Endothelial cell of umbilical vein (primary cell): ENCODE measurements at regions of chr7 and their contacts with region 1.

Region 1: DNA sequence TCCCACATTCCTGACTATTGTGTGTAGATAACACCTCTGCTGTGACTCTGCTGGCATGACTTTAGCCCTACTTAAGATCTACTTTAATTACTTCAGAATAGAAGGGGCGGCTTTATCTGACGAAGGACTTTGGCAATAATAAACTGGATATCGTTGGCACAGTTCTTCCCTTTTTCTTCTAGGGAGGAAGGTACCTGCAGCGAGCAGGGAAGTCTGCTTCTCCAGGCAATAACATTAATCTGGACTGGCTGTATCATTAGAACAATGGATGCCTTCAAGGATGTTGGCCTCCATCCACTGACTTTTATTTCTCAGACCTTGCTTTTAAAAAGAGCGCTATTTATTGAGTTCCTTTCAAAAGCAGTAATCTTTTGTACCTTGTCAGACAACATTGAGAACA is 172.6 kb upstream of the THSD7A start:
- DNase-seq: no peak
- H3K4me3 ChIP-seq: no peak overlapping the region
- H3K27ac ChIP-seq: no peak overlapping the region
- H3K4me1 ChIP-seq: no peaks in the 10 kb centered on the region
- H3K27me3 ChIP-seq: no peaks in the 10 kb centered on the region
- CTCF ChIP-seq: no peak
- POLR2A ChIP-seq: no peak

Region 2: GRCh38 chr7:12052211-12052610 is 47.6 kb after region 1 on chr7:
- CTCF ChIA-PET with region 1: no interaction called
- POLR2A ChIA-PET with region 1: no interaction called
- dilution Hi-C with region 1: no loop called
- intact Hi-C with region 1: loop called (anchors 5 kb)
- DNase-seq: no peak
- H3K4me3 ChIP-seq: no peak overlapping the region
- H3K27ac ChIP-seq: no peak overlapping the region
- H3K4me1 ChIP-seq: no peaks in the 10 kb centered on the region
- H3K27me3 ChIP-seq: no peaks in the 10 kb centered on the region
- CTCF ChIP-seq: no peak
- POLR2A ChIP-seq: no peak

Region 3: GRCh38 chr7:12067141-12067831 is 62.7 kb after region 1 on chr7:
- CTCF ChIA-PET with region 1: no interaction called
- POLR2A ChIA-PET with region 1: no interaction called
- dilution Hi-C with region 1: no loop called
- intact Hi-C with region 1: no loop called
- DNase-seq: peak; percentile 60
- H3K4me3 ChIP-seq: no peak overlapping the region
- H3K27ac ChIP-seq: no peak overlapping the region
- H3K4me1 ChIP-seq: no peaks in the 10 kb centered on the region
- H3K27me3 ChIP-seq: no peaks in the 10 kb centered on the region
- CTCF ChIP-seq: peak; percentile 57 to 62
- POLR2A ChIP-seq: no peak